Naive thymus-derived CD4-positive, alpha-beta T cell (primary cell): ENCODE measurements at regions of chrX and their contacts with region 1.

Region 1: GRCh38 chrX:150365051-150365989 is 2.2 kb downstream of the MAMLD1 start:
- DNase-seq: peak in 8 of 9 donors; percentile 19 to 79 (median 46)
- ATAC-seq: peak; percentile 61
- H3K4me3 ChIP-seq: peak overlapping the region; percentile 50
- H3K4me3 Mint-ChIP-seq: peak overlapping the region; percentile 81 to 96 (median 87)
- H3K27ac ChIP-seq: no peak overlapping the region
- H3K27ac Mint-ChIP-seq: peak overlapping the region in 4 of 9 donors; percentile 11 to 80 (median 42)
- H3K4me1 ChIP-seq: peaks cover 0 to 11% of the 10 kb centered on the region in 2 donors
- H3K4me1 Mint-ChIP-seq: peaks cover 0 to 32% (median 19%) of the 10 kb centered on the region in 7 donors
- H3K27me3 ChIP-seq: peaks cover 0 to 5% of the 10 kb centered on the region in 2 donors
- H3K27me3 Mint-ChIP-seq: peaks cover 0 to 22% (median 9%) of the 10 kb centered on the region in 5 donors

Region 2: DNA sequence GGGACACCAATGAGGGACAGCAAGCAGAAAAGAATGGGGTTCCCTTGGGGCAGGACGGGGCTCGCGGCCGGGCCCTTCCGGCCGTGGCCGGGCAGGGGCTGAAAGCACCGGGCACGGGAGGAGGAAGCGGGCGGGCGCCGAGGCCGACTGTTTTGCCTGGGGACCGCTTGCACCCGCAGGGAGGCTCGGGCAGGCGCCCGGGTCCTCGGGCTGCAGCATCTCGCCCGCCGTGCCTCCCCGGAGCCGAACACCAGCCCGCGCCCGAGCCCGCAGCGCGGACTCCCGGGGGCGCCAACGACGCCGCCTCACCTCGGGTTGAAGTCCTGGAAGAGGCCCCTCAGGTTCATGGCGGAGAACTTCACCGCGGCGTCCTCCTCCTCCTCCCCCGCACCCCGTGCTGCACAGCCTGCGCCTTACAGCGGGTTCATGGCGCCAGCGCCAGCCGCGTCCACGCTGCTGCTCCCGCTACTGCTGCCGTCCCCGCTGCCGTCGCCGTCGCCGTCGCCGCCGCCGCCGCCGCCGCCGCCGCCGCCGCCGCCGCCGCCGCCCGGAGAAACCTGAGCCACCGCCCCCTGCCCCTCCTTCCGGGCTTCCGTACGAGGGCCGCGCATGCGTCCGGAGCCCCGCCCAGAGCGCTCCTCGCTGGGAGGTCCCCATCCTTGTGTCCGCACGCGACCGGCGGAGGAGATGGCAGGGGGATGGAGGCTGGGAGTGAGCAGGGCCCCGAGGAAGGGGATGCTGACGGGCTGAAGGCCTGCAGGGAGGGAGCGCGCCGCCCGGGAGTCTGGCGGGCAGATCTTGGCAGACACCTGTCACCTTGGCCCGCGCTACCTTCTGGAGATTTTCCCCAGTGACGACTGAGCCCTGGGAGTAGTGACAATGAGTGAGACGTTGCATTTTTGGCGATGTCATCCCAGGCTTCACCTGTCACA is 733.8 kb before region 1 on chrX and contains the start of gene TMEM185A:
- CTCF ChIA-PET with region 1: no interaction called
- POLR2A ChIA-PET with region 1: no interaction called
- intact Hi-C with region 1: loop called in 1 of 2 experiments (anchors 10 kb)
- DNase-seq: peak; percentile 48 to 79 (median 71)
- ATAC-seq: peak; percentile 92
- H3K4me3 ChIP-seq: peak within 1 kb of the TSS; percentile 68
- H3K4me3 Mint-ChIP-seq: peak within 1 kb of the TSS; percentile 84 to 98 (median 92)
- H3K27ac ChIP-seq: peak within 1 kb of the TSS; percentile 72
- H3K27ac Mint-ChIP-seq: peak within 1 kb of the TSS; percentile 78 to 94 (median 83)
- H3K4me1 ChIP-seq: peaks cover 12% of the 10 kb centered on the region in 2 donors
- H3K4me1 Mint-ChIP-seq: peaks cover 29 to 43% (median 39%) of the 10 kb centered on the region in 7 donors
- H3K27me3 ChIP-seq: no peaks in the 10 kb centered on the region
- H3K27me3 Mint-ChIP-seq: peaks cover 0 to 9% (median 0%) of the 10 kb centered on the region in 5 donors
- total RNA-seq, gene TMEM185A: 11.9 to 23.4 (median 19.9) TPM

Region 3: DNA sequence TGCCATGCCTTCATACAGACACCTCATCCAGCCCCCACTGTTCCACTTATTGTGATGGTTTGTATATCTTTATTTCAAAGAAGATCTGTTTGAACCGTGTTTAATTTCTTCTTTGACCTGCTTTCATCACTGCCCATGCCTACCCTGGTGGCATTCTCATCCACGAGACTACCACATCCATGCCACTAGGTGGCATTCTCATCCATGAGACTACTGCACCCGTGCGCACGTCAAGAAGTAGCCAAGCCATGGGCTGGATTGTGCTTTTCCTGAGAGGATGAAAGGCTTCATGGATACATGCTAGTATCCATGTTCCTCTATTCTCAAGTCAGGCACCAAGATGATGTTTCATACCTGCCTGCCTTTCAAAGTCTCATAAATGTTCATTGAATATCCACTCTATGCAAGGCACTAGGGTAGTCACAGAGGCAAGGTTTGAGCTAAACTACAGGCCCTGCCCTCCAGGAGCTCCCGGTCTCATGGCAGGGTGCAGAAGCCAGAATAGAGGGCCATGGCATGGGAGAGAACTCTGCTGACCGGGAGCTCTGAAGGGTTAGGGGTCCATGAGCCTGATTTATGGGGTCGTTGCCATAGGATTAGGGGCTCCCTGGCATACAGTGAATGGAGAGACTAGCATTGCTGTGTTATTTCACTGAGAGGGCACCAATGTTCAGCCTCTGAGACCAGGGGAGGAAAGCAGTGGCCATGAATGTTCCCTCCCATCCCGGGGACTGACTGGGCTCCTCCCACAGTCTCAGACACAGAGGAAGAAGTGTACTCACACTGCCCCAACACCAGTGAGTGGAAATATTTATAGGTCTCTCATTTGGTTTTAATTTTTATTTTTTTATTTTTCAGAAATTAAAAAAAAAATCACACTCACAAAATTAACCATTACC is 402.2 kb before region 1 on chrX:
- CTCF ChIA-PET with region 1: no interaction called
- POLR2A ChIA-PET with region 1: no interaction called
- intact Hi-C with region 1: loop called in 1 of 2 experiments (anchors 2 kb)
- DNase-seq: peak in 3 of 9 donors; percentile 10 to 24 (median 11)
- ATAC-seq: peak; percentile 51
- H3K4me3 ChIP-seq: no peak overlapping the region
- H3K4me3 Mint-ChIP-seq: no peak overlapping the region
- H3K27ac ChIP-seq: no peak overlapping the region
- H3K27ac Mint-ChIP-seq: no peak overlapping the region
- H3K4me1 ChIP-seq: no peaks in the 10 kb centered on the region
- H3K4me1 Mint-ChIP-seq: peaks cover 0 to 4% (median 0%) of the 10 kb centered on the region in 7 donors
- H3K27me3 ChIP-seq: no peaks in the 10 kb centered on the region
- H3K27me3 Mint-ChIP-seq: no peaks in the 10 kb centered on the region

Region 4: GRCh38 chrX:150486011-150486410 is 120.7 kb after region 1 on chrX:
- CTCF ChIA-PET with region 1: no interaction called
- POLR2A ChIA-PET with region 1: no interaction called
- intact Hi-C with region 1: loop called (anchors 1 to 2 kb)
- DNase-seq: peak in 8 of 9 donors; percentile 7 to 46 (median 34)
- ATAC-seq: peak; percentile 74
- H3K4me3 ChIP-seq: no peak overlapping the region
- H3K4me3 Mint-ChIP-seq: no peak overlapping the region
- H3K27ac ChIP-seq: no peak overlapping the region
- H3K27ac Mint-ChIP-seq: no peak overlapping the region
- H3K4me1 ChIP-seq: no peaks in the 10 kb centered on the region
- H3K4me1 Mint-ChIP-seq: peaks cover 0 to 48% (median 0%) of the 10 kb centered on the region in 7 donors
- H3K27me3 ChIP-seq: no peaks in the 10 kb centered on the region
- H3K27me3 Mint-ChIP-seq: no peaks in the 10 kb centered on the region

Region 5: GRCh38 chrX:150575416-150575808 is 210.1 kb after region 1 on chrX:
- CTCF ChIA-PET with region 1: no interaction called
- POLR2A ChIA-PET with region 1: no interaction called
- intact Hi-C with region 1: loop called in 1 of 2 experiments (anchors 2 kb)
- DNase-seq: peak in 4 of 9 donors; percentile 15 to 75 (median 36)
- ATAC-seq: peak; percentile 78
- H3K4me3 ChIP-seq: peak overlapping the region; percentile 42
- H3K4me3 Mint-ChIP-seq: peak overlapping the region; percentile 64 to 86 (median 78)
- H3K27ac ChIP-seq: peak overlapping the region; percentile 59
- H3K27ac Mint-ChIP-seq: peak overlapping the region; percentile 45 to 94 (median 83)
- H3K4me1 ChIP-seq: peaks cover 62 to 68% of the 10 kb centered on the region in 2 donors
- H3K4me1 Mint-ChIP-seq: peaks cover 23 to 88% (median 79%) of the 10 kb centered on the region in 7 donors
- H3K27me3 ChIP-seq: no peaks in the 10 kb centered on the region
- H3K27me3 Mint-ChIP-seq: no peaks in the 10 kb centered on the region

Region 6: GRCh38 chrX:150898343-150899190 is 533.2 kb after region 1 on chrX and contains the start of gene CD99L2:
- CTCF ChIA-PET with region 1: no interaction called
- POLR2A ChIA-PET with region 1: no interaction called
- intact Hi-C with region 1: loop called (anchors 1 to 5 kb)
- DNase-seq: peak; percentile 79 to 92 (median 85)
- ATAC-seq: peak; percentile 98
- H3K4me3 ChIP-seq: peak within 1 kb of the TSS; percentile 71
- H3K4me3 Mint-ChIP-seq: peak within 1 kb of the TSS; percentile 76 to 96 (median 90)
- H3K27ac ChIP-seq: peak within 1 kb of the TSS; percentile 89
- H3K27ac Mint-ChIP-seq: peak within 1 kb of the TSS in 8 of 9 donors; percentile 31 to 90 (median 76)
- H3K4me1 ChIP-seq: peaks cover 0 to 4% of the 10 kb centered on the region in 2 donors
- H3K4me1 Mint-ChIP-seq: peaks cover 0 to 16% (median 6%) of the 10 kb centered on the region in 7 donors
- H3K27me3 ChIP-seq: no peaks in the 10 kb centered on the region
- H3K27me3 Mint-ChIP-seq: peaks cover 0 to 26% (median 0%) of the 10 kb centered on the region in 5 donors
- total RNA-seq, gene CD99L2: 14.3 to 20.4 (median 15.6) TPM